WTC11 (cell line): ENCODE measurements at regions of chr1 and their contacts with region 1.

Region 1: DNA sequence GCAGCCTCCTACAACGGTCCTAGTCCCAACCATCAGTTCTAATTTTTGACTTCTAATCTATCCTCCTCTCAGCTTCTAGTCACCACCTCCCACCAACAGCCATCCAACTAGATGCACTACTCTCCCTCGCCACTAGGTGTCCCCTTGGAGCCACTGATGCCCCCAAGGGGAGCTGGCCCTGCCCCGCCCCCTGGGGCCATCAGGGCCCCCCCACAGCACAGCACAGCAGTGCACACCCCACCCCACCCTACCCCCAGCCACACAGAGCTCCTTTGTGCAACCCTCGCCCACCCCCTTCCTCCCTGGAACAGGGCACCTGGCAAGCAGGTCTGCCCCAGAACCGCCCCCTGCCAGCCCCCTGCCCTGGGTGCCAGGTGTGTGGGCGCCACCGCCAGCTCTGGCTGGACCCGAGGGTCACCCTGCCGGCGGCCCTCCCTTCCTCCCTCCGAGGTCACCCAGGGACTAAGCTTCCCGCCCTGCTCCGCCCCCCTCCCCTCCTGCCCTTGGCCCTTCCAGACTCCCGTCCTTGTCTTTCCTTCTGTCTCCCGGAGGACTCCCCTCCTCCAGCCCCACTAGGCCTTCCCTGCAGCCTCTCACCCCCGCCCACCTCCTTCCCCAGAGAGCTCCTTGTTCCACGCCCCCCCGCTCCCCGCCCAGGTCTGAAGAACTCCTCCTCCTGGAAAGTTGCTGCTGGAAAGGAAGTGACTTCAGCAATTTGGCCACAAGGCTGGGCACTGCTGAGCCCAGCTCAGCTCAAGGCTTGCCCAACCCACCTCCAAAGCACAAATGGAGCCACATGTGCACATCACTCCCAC is 47.0 kb downstream of the AHDC1 start:
- DNase-seq: peak; percentile 91
- ATAC-seq: peak; percentile 76
- H3K4me3 Mint-ChIP-seq: peak overlapping the region; percentile 50
- H3K27ac Mint-ChIP-seq: peak overlapping the region; percentile 99
- H3K4me1 Mint-ChIP-seq: peaks cover 54% of the 10 kb centered on the region
- H3K27me3 Mint-ChIP-seq: no peaks in the 10 kb centered on the region
- CTCF ChIP-seq: peak; percentile 97

Region 2: GRCh38 chr1:27392096-27392777 is 164.8 kb before region 1 on chr1 and contains the start of gene GPR3:
- CTCF ChIA-PET with region 1: interaction called, 17 read pairs
- POLR2A ChIA-PET with region 1: no interaction called
- DNase-seq: peak; percentile 96
- ATAC-seq: peak; percentile 72
- H3K4me3 Mint-ChIP-seq: peak within 1 kb of the TSS; percentile 91
- H3K27ac Mint-ChIP-seq: peak within 1 kb of the TSS; percentile 95
- H3K4me1 Mint-ChIP-seq: peaks cover 24% of the 10 kb centered on the region
- H3K27me3 Mint-ChIP-seq: peaks cover 4% of the 10 kb centered on the region
- CTCF ChIP-seq: peak; percentile 20; the same call in 1 of the 2 replicates
- total RNA-seq, gene GPR3: 7.8 to 12.4 TPM (median 7.8 TPM) in 3 replicates

Region 3: DNA sequence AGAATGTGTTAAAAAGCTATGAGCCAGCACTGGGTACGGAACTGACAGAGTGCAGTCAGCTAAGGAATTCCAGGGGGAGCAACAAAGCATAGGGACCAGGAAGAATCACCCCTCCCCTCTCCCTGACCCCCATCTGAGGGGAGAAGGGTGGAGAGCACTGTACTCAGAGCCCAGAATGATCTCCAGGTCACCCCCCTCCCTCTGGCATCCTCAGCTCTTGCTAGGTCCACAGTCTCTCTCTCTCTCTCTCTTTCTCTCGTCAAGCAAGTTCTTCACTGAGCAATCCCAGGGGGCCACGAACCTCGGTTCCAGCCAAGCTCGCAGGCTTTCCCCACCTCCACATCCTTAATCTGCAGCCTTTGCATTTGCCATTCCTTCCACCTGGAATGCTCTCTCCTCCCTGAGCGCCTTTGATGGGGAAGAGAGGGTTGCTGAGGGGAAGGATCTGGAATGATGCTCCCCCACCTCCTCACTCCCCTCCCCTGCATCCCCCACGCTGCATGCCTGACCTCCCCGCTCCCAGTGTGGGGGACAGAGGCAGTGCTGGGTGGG is 60.3 kb before region 1 on chr1:
- CTCF ChIA-PET with region 1: interaction called, 44 read pairs
- POLR2A ChIA-PET with region 1: interaction called, 7 read pairs
- DNase-seq: peak; percentile 76
- ATAC-seq: peak; percentile 97
- H3K4me3 Mint-ChIP-seq: peak overlapping the region; percentile 53
- H3K27ac Mint-ChIP-seq: peak overlapping the region; percentile 90
- H3K4me1 Mint-ChIP-seq: peaks cover 23% of the 10 kb centered on the region
- H3K27me3 Mint-ChIP-seq: no peaks in the 10 kb centered on the region
- CTCF ChIP-seq: no peak

Region 4: DNA sequence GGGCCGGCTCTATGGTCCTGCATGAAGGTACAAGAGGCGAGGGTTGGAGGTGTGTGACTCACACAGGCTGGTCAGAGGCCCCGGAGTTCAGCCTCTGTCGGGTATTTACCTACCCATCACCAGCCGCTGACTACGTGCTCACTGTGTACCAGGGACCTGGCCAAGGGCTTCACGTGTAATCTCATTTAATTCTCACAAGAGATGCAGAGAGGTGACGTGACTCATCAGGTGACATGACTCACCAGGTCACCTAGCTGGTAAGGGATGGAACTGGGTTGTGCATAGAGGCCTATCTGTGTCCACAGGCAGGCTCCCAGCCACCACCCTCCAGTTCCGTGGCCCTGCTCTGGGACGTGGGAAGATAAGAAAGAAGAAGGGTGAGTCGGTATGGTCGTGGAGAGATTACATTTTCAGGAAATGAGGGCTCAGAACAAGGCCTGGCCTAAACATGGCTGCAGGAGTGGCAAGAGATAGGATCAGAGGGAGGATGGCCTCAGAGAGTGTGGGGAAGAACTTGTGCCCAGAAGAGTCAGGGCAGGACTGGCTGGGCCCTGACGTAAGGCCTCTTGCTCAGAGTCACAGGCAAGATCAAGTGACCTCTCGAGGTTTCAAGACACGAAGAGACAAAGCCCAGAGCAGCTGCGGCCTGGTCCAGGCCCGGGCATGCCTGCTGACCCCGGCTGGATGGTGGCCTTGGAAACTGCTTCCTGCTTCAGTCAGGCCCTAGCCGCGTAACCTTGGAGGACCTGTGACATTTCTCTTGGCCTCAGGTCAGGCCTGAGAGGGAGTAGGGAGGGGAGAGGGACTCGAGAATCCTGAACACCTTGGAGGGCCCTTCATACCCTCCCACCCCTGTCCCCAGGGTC is 14.3 kb before region 1 on chr1:
- CTCF ChIA-PET with region 1: interaction called, 87 read pairs
- POLR2A ChIA-PET with region 1: interaction called, 4 read pairs
- DNase-seq: no peak
- ATAC-seq: no peak
- H3K4me3 Mint-ChIP-seq: no peak overlapping the region
- H3K27ac Mint-ChIP-seq: peak overlapping the region; percentile 92
- H3K4me1 Mint-ChIP-seq: peaks cover 40% of the 10 kb centered on the region
- H3K27me3 Mint-ChIP-seq: no peaks in the 10 kb centered on the region
- CTCF ChIP-seq: no peak

Region 5: GRCh38 chr1:27589841-27590426 is 32.9 kb after region 1 on chr1:
- CTCF ChIA-PET with region 1: interaction called, 61 read pairs
- POLR2A ChIA-PET with region 1: no interaction called
- DNase-seq: no peak
- ATAC-seq: no peak
- H3K4me3 Mint-ChIP-seq: no peak overlapping the region
- H3K27ac Mint-ChIP-seq: no peak overlapping the region
- H3K4me1 Mint-ChIP-seq: peaks cover 12% of the 10 kb centered on the region
- H3K27me3 Mint-ChIP-seq: no peaks in the 10 kb centered on the region
- CTCF ChIP-seq: no peak

Region 6: GRCh38 chr1:27662707-27663393 is 105.9 kb after region 1 on chr1:
- CTCF ChIA-PET with region 1: interaction called, 51 read pairs
- POLR2A ChIA-PET with region 1: no interaction called
- DNase-seq: peak; percentile 95
- ATAC-seq: peak; percentile 81
- H3K4me3 Mint-ChIP-seq: no peak overlapping the region
- H3K27ac Mint-ChIP-seq: peak overlapping the region; percentile 75
- H3K4me1 Mint-ChIP-seq: peaks cover 29% of the 10 kb centered on the region
- H3K27me3 Mint-ChIP-seq: peaks cover 3% of the 10 kb centered on the region; the same call in 1 of the 2 replicates
- CTCF ChIP-seq: peak; percentile 91